ENCODE measurements at regions of chr11 and their contacts with region 1.

Region 1: DNA sequence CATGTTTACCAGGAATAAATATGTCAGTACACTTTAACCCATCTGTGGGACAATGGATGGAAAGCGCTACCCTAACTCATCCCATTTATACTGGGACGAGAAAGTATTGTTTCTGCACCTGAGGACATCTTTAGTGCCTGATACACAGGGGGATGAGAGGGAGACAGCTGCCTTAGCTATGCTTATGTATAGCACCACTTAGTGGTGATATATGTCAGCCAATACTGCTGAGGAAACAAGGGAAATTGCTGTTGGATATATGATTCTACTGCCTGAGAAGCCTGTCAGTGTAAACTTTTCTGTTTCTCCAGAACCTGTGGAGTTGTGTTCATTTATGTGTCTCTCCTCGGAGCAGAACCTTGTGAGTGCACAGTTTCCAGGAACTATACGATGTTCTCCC is 13.3 kb upstream of the CEP295 start:
- DNase-seq: peak; percentile 36

Region 2: GRCh38 chr11:93116641-93117441 is 531.3 kb before region 1 on chr11:
- in situ Hi-C with region 1: no loop called
- DNase-seq: no peak

Region 3: GRCh38 chr11:93234602-93235207 is 413.5 kb before region 1 on chr11:
- in situ Hi-C with region 1: loop called (anchors 25 kb)
- DNase-seq: peak; percentile 68

Region 4: GRCh38 chr11:93591247-93591898 is 56.8 kb before region 1 on chr11:
- in situ Hi-C with region 1: no loop called
- DNase-seq: peak; percentile 40

Region 5: GRCh38 chr11:93747122-93747521 is 99.0 kb after region 1 on chr11:
- in situ Hi-C with region 1: no loop called
- DNase-seq: no peak